Panc1 (cell line): ENCODE measurements at regions of chr15 and their contacts with region 1.

Region 1: DNA sequence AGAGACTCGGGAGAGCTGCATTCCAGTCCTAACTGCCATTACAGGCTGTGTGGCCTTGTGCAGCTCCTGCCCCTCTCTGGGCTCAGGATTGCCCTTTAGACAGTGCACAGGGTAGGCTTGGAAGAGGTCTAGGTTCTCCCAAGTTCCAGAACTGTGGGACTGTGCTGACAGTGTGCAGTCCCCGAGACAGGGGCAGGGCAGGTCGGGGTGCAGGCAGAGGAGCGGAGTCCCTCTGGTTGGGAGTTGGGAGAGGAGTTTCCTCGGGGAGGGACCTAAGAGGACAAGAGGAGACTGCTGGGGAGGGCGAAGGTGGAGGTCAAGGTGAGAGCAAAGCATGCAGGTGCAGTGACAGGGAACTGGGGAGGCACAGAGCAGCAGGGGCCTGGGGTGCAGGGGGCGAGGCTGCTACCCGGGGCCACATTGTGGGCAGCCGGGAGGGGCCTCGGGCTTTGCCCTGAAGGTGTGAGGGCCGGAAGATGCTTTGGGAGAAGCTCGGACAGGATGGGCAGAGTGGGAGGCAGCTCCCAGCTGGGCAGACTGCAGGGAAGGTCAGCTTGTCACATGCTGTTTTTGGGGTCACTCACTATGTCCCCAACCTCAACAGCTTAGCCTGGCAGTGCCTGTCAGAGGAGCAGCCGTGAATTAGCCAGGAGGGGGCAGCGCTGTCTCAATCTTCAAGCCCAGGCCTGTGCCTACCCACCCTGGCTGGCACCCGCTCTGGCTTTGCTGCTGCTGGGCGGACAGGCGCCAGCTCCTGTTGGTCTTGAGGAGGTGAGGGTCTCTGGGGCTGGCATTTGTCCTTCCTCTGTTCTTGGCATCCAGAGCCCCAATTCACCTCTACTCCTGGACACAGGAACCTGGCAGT is 15.4 kb upstream of the CSPG4 start:
- DNase-seq: no peak
- ATAC-seq: peak; percentile 72
- H3K4me3 ChIP-seq: no peak overlapping the region
- H3K27ac ChIP-seq: no peak overlapping the region
- H3K4me1 ChIP-seq: peaks cover 5% of the 10 kb centered on the region; the same call in 1 of the 2 replicates
- H3K27me3 ChIP-seq: no peaks in the 10 kb centered on the region
- CTCF ChIP-seq: peak; percentile 84

Region 2: DNA sequence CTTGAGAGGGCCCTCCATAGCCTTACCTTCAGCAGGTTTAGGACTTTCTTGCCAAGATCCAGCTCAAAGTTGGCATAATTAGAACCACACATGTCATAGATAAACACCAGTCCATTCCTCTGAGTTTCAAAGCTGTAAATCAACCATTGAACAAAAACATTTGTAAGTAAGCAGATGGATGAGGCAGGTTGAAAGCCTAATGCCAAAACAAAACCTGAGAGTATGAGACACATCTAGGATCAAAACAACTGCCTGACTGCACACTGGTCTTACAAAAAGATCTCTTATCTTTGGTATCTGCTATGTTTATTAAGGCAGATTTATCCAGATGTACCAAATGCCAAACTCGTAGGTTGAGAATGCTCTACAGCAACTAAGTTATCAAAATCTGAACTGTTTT is 210.8 kb before region 1 on chr15:
- CTCF ChIA-PET with region 1: no interaction called
- POLR2A ChIA-PET with region 1: no interaction called
- in situ Hi-C with region 1: no loop called
- intact Hi-C with region 1: no loop called
- DNase-seq: no peak
- ATAC-seq: no peak
- H3K4me3 ChIP-seq: no peak overlapping the region
- H3K27ac ChIP-seq: no peak overlapping the region
- H3K4me1 ChIP-seq: no peaks in the 10 kb centered on the region
- H3K27me3 ChIP-seq: no peaks in the 10 kb centered on the region
- CTCF ChIP-seq: no peak

Region 3: GRCh38 chr15:75597667-75598341 is 130.3 kb before region 1 on chr15:
- CTCF ChIA-PET with region 1: no interaction called
- POLR2A ChIA-PET with region 1: no interaction called
- in situ Hi-C with region 1: no loop called
- intact Hi-C with region 1: no loop called
- DNase-seq: no peak
- ATAC-seq: no peak
- H3K4me3 ChIP-seq: no peak overlapping the region
- H3K27ac ChIP-seq: no peak overlapping the region
- H3K4me1 ChIP-seq: no peaks in the 10 kb centered on the region
- H3K27me3 ChIP-seq: no peaks in the 10 kb centered on the region
- CTCF ChIP-seq: no peak

Region 4: GRCh38 chr15:75694241-75695182 is 33.6 kb before region 1 on chr15:
- CTCF ChIA-PET with region 1: interaction called, 10 read pairs
- POLR2A ChIA-PET with region 1: no interaction called
- in situ Hi-C with region 1: no loop called
- intact Hi-C with region 1: no loop called
- DNase-seq: no peak
- ATAC-seq: peak; percentile 90
- H3K4me3 ChIP-seq: peak overlapping the region in 1 of 2 experiments; percentile 13; a peak in 1 of 4 replicates
- H3K27ac ChIP-seq: peak overlapping the region; percentile 74
- H3K4me1 ChIP-seq: peaks cover 33% of the 10 kb centered on the region
- H3K27me3 ChIP-seq: no peaks in the 10 kb centered on the region
- CTCF ChIP-seq: peak; percentile 86

Region 5: DNA sequence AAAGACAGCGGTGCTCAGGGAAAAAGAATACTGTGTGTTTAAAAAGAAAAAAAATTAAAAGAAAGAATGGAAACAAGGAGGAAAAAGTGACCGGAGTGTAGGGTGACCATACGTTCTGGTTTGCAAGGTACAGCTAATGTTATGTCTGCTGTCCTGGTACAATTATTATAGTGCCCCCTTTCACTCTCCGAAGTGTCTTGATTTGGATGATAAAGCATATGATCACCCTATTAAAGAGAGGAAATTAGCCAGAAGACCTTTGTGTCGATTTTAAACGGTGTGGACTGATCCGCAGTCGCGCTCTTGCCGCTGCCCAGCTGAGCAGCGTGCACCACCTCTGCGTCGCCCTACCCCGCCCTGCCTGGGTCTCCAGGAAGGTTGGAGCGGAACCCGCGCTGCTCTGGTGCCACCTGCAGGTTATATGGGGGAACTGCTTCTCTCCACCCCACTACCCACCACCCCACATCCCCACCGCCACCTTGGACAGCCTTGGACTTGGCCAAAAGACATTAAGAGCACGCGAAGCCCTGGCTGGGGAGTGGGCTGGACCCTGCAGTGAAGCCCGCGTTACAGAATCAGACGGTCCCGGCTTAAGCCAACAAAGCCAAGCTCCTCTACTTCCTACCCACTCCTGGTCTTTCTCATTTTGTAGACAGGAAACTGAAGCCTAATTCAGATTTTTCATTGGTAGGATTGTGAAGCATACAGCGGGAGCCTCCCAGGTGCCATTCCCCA is 73.9 kb after region 1 on chr15:
- CTCF ChIA-PET with region 1: interaction called, 4 read pairs
- POLR2A ChIA-PET with region 1: no interaction called
- in situ Hi-C with region 1: no loop called
- intact Hi-C with region 1: loop called (anchors 1 kb)
- DNase-seq: peak; percentile 56
- ATAC-seq: peak; percentile 99
- H3K4me3 ChIP-seq: peak overlapping the region; percentile 31 to 48
- H3K27ac ChIP-seq: no peak overlapping the region
- H3K4me1 ChIP-seq: peaks cover 4% of the 10 kb centered on the region
- H3K27me3 ChIP-seq: peaks cover 15% of the 10 kb centered on the region
- CTCF ChIP-seq: peak; percentile 95